Activated CD8-positive, alpha-beta T cell treated with anti-CD3 and anti-CD28 coated beads, Interleukin-2, amount 10 ng/mL, durations not matched to agents 7 days and 5 days (primary cell): ENCODE measurements at regions of chr3 and their contacts with region 1.

Region 1: GRCh38 chr3:4633078-4634004 is 140.2 kb downstream of the ITPR1 start:
- DNase-seq: no peak
- ATAC-seq: peak; percentile 68
- H3K4me3 Mint-ChIP-seq: no peak overlapping the region
- H3K27ac Mint-ChIP-seq: peak overlapping the region; percentile 47
- H3K4me1 Mint-ChIP-seq: peaks cover 9% of the 10 kb centered on the region
- H3K27me3 Mint-ChIP-seq: no peaks in the 10 kb centered on the region

Region 2: GRCh38 chr3:4438293-4438692 is 195.0 kb before region 1 on chr3:
- CTCF ChIA-PET with region 1: no interaction called
- POLR2A ChIA-PET with region 1: no interaction called
- DNase-seq: no peak
- ATAC-seq: no peak
- H3K4me3 Mint-ChIP-seq: no peak overlapping the region
- H3K27ac Mint-ChIP-seq: no peak overlapping the region
- H3K4me1 Mint-ChIP-seq: no peaks in the 10 kb centered on the region
- H3K27me3 Mint-ChIP-seq: no peaks in the 10 kb centered on the region

Region 3: GRCh38 chr3:4493014-4493940 is 140.1 kb before region 1 on chr3 and contains the start of gene ITPR1:
- CTCF ChIA-PET with region 1: interaction called, 23 read pairs
- POLR2A ChIA-PET with region 1: interaction called, 3 read pairs
- DNase-seq: peak; percentile 99
- ATAC-seq: peak; percentile 91
- H3K4me3 Mint-ChIP-seq: peak within 1 kb of the TSS; percentile 94
- H3K27ac Mint-ChIP-seq: peak within 1 kb of the TSS; percentile 89
- H3K4me1 Mint-ChIP-seq: peaks cover 39% of the 10 kb centered on the region
- H3K27me3 Mint-ChIP-seq: peaks cover 20% of the 10 kb centered on the region
- total RNA-seq, gene ITPR1: 53.8 to 57.3 TPM

Region 4: DNA sequence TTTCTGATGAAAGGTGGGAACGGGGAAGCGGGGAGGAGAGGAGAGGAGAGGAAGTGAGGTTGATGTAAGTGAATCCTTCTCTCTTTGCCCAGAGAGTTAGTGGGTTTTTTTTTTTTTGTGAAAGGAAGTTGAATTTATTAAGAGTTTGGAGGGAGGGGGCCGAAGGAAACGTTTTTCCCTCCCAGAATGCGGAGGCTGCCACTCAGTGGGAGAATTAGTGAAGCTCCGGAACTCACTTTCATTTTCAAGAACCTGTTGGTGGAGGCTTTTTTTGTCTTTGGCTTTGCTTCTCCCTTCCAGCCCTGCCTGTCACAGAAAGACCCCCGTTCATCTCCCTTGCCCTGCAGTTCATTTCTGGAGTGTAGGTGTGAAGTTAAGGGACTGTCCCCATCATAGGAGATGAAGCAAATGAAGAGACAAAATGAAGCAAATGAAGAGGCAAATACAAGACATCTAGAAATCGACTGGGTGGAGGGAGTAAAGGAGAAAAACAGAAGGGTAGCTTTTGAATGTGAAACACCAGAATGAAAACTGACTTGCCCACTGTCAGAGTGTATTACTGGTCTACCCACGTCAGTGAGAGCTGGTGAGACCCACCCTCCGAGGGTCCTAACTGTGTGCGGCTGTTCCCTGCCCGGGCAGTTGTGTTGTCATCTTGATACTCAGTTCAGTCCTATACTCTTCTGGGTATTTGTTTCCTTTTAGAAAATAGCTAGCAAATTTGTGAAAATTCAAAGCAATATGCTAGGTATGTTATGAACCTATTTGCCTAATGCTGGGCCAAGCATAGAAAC is 48.7 kb before region 1 on chr3:
- CTCF ChIA-PET with region 1: interaction called, 11 read pairs
- POLR2A ChIA-PET with region 1: no interaction called
- DNase-seq: peak; percentile 40
- ATAC-seq: peak; percentile 59
- H3K4me3 Mint-ChIP-seq: peak overlapping the region; percentile 77
- H3K27ac Mint-ChIP-seq: peak overlapping the region; percentile 79
- H3K4me1 Mint-ChIP-seq: peaks cover 50% of the 10 kb centered on the region
- H3K27me3 Mint-ChIP-seq: no peaks in the 10 kb centered on the region

Region 5: GRCh38 chr3:4643904-4644547 is 10.7 kb after region 1 on chr3:
- CTCF ChIA-PET with region 1: interaction called, 20 read pairs
- POLR2A ChIA-PET with region 1: no interaction called
- DNase-seq: no peak
- ATAC-seq: no peak
- H3K4me3 Mint-ChIP-seq: no peak overlapping the region
- H3K27ac Mint-ChIP-seq: no peak overlapping the region
- H3K4me1 Mint-ChIP-seq: peaks cover 26% of the 10 kb centered on the region
- H3K27me3 Mint-ChIP-seq: no peaks in the 10 kb centered on the region

Region 6: DNA sequence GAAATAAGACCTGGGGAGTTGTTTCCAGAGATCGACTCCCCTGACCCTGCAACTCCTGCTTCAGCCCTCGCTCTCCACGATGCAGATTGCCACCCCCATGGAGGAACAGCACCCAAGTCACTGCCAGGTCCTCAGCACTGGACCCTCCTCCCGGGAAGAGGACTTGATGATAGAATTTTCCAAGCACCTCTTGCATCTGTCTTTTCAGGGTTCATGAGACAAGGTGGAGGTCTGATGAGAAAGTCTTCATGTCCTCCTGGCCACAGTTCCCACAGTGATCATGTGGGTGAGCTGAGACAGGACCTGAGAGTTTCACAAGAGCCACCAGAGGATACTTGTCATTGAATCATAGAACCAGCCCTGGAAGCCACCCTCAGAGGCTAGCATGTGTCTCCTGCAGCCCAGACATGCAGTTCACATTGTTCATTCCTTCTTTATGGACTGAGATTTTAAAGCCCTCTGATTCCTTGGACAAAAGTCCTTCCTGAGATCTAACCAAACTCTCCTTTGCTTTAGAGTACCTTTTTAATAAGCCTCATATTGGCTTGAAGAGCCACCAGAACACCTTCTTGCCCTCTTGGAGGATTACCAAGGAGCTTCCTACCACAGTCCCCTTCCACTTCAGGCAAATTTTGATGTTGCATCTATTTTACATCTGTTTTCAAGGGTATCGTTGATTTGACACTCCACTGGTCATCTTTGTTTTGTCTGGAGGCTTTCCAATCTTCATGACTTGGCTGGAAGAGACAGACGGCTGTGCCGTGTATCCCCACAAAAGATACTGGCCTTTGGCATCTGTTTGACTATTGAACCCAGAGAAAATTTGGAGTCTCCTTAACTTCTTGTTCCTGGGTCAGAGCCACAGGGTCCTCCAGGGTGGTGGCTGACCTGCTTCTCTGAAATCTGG is 121.1 kb after region 1 on chr3:
- CTCF ChIA-PET with region 1: no interaction called
- POLR2A ChIA-PET with region 1: no interaction called
- DNase-seq: peak; percentile 38
- ATAC-seq: peak; percentile 37
- H3K4me3 Mint-ChIP-seq: no peak overlapping the region
- H3K27ac Mint-ChIP-seq: peak overlapping the region; percentile 59
- H3K4me1 Mint-ChIP-seq: peaks cover 86% of the 10 kb centered on the region
- H3K27me3 Mint-ChIP-seq: no peaks in the 10 kb centered on the region

Region 7: GRCh38 chr3:4855676-4856075 is 222.3 kb after region 1 on chr3:
- CTCF ChIA-PET with region 1: no interaction called
- POLR2A ChIA-PET with region 1: no interaction called
- DNase-seq: no peak
- ATAC-seq: no peak
- H3K4me3 Mint-ChIP-seq: no peak overlapping the region
- H3K27ac Mint-ChIP-seq: peak overlapping the region; percentile 51
- H3K4me1 Mint-ChIP-seq: peaks cover 68% of the 10 kb centered on the region
- H3K27me3 Mint-ChIP-seq: no peaks in the 10 kb centered on the region